GM10248 (cell line): ENCODE measurements at regions of chr16 and their contacts with region 1.

Region 1: DNA sequence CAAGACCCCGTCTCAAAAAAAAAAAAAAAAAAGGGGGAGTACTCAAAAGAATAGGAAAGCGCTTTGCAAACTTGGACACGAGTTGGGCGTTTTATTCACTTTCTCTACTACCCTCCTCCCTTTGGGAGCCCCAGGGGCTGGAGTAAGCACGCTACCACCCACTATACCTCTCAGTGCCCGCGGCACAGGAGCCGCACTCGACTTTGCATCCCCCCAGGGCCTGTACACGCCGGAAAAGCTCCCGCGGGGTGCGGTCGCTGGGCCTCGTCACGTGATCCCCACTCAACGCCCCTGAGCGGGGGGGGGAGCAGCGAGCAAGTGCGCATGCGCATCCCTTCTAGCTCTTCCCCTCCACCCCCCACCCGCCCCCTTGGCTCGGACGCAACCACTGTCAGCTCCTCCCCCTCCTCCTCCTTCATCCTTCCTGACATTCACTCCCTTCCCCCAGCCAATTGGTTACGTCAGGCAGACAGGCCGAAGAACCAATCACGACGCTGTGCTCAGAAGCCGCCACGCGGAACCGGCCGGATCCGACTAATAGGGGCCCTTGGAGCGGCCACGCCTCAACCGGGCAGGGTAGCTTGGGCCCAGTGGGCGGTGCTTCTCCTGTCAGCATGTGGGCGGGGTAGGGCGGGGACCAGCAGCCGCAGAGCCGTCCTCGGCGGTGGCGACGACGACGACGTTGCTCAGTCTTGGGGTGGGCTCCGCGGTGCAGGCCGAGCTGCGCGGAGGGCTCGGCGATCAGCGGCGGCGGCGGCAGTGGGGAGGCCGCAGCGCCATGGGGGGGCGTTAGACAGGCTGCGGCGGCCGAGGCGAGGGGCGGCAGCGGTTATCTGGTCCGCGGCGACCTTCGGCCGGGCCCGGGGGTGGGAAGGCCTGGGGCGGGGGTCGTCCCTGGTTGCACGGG is at the start of gene HAPSTR1:
- DNase-seq: peak; percentile 97
- CTCF ChIP-seq: no peak

Region 2: GRCh38 chr16:10338426-10338825 is 1247.2 kb after region 1 on chr16:
- CTCF ChIA-PET with region 1: no interaction called
- POLR2A ChIA-PET with region 1: interaction called, 10 read pairs
- DNase-seq: no peak
- CTCF ChIP-seq: no peak